ENCODE measurements at regions of chrX and their contacts with region 1.

Region 1: DNA sequence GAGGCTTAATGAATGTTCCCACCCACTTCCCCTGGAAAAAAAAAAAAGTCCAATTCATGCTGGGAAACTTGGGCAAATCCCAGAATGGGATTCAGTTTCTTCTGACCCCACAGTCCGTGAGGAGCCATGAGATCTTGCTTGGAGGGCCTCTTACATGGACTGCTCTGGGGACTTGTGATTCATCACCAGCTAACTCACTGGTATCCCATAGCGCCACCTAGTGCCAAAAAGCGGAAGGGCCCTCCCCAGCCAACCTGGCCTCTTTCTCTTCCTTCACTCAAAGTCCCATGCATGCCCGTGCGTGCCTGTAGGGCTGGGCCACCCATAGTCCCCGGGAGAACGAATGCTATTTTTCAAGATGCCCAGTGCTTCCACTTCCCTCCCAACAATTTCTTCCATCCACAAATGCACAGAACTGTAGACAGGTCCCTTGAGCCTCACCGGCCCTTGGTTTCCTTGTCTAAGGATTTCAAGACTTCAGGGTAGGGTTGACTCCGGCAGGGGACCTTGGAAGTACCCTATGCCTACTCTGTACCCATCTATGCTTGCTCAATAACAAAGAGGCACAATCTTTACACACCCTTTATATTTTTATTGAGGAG is 5.1 kb downstream of the RTL5 start:
- DNase-seq: peak; percentile 87 to 92
- H3K4me3 ChIP-seq: no peak overlapping the region
- H3K27ac ChIP-seq: peak overlapping the region; percentile 82 to 85
- H3K4me1 ChIP-seq: peaks cover 0 to 78% (median 38%) of the 10 kb centered on the region in 4 donors
- H3K27me3 ChIP-seq: no peaks in the 10 kb centered on the region
- CTCF ChIP-seq: peak; percentile 80 to 81

Region 2: DNA sequence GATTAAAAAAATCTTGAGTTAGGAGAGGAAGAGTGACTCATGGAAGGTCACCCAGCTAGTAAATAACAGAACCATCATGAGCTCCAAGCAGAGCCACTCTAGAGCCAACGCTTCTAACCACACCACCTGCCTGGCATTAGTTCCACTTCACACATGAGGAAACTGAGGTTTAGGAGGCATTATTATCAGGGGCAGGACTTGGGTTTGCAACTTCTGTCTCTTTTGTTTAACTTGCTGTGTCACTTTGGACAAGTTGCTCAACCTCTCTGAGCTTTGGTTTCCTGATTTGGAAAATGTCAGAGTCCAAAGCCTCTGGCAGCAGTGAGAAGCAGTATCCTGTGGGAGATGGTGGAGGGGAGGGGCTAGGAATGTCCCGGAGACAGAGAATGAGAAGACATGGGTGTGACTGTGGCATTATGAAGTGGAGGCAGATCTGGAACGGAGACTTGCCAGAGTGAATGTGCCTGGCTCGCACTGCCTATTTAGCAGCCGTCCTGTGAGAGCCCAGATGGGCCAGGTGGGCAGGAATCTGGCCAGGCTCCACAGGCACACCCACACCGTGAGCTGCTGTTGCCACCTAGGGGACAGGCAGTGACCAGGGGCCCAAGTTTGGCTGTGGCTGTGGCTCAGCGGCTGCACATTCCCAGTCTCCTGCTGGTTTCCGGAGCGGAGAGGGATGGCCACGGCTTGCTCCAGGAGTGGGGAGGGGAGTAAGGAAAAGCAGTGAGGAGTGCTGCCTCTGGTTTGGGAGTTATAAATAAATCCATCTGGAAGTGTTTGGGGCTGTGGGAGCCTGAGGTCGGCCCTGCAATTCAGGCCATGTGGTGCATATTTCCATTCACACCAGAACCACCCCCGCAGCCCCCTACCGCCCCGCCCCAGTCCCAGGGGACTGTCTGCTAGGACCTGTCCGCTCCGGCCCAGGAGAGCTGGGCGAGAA is 122.6 kb before region 1 on chrX:
- intact Hi-C with region 1: loop called (anchors 5 kb)
- DNase-seq: peak in 1 of 2 donors; percentile 40
- H3K4me3 ChIP-seq: no peak overlapping the region
- H3K27ac ChIP-seq: peak overlapping the region; percentile 55 to 68
- H3K4me1 ChIP-seq: peaks cover 0 to 26% (median 7%) of the 10 kb centered on the region in 4 donors
- H3K27me3 ChIP-seq: no peaks in the 10 kb centered on the region
- CTCF ChIP-seq: no peak

Region 3: DNA sequence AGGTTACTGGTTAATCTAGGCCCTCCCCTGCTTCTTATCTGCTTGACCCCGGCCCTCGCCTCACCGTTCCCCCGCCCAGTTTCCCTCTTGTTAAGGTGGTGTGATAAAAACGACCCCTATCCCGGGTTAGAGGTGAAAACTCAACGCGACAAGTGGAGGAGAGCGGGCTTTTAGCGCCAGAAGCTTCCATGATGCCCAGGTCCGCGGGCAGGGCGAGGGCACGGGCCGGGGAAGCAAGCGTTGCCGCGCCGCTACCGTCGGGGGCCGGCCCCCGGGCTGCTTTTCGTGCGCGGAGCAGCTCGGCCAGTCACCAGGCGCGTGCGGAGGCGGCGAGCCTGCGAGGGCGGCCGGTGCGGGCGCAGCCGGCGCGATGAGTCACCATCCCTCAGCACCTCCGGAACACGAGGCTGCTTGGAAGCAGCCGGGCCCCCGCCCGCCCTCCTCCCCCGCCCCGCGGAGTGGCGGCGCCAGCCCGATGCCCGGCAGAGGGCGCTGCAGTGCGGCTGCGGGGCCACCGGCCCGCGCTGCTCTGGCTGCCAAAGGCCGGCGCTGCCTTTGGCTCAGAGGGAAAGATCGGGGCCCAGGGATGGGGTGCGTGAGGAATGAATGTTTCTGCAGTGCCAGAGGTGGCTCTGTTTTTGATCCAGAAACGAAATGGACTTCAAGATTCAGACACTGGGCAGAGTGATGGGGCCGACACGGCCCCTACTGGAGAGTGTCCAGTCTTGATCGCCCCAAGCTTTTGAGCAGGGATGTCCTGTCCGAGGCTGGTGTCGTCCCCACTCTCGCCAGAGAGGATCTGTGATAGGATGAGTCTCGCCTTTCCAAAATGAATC is 108.1 kb before region 1 on chrX:
- intact Hi-C with region 1: loop called (anchors 2 kb)
- DNase-seq: peak; percentile 80 to 94
- H3K4me3 ChIP-seq: peak overlapping the region; percentile 34 to 44
- H3K27ac ChIP-seq: peak overlapping the region; percentile 70 to 74
- H3K4me1 ChIP-seq: peaks cover 0 to 10% (median 3%) of the 10 kb centered on the region in 4 donors
- H3K27me3 ChIP-seq: no peaks in the 10 kb centered on the region
- CTCF ChIP-seq: peak; percentile 72 to 74